Activated CD8-positive, alpha-beta T cell treated with anti-CD3 and anti-CD28 coated beads, Interleukin-2, amount 10 ng/mL, durations not matched to agents 7 days and 5 days (primary cell): ENCODE measurements at regions of chr12 and their contacts with region 1.

Region 1: GRCh38 chr12:44972746-44973421 is 78.0 kb downstream of the DBX2 start:
- DNase-seq: peak; percentile 51
- ATAC-seq: peak; percentile 65
- H3K4me3 Mint-ChIP-seq: no peak overlapping the region
- H3K27ac Mint-ChIP-seq: peak overlapping the region; percentile 37
- H3K4me1 Mint-ChIP-seq: peaks cover 21% of the 10 kb centered on the region
- H3K27me3 Mint-ChIP-seq: peaks cover 7% of the 10 kb centered on the region

Region 2: DNA sequence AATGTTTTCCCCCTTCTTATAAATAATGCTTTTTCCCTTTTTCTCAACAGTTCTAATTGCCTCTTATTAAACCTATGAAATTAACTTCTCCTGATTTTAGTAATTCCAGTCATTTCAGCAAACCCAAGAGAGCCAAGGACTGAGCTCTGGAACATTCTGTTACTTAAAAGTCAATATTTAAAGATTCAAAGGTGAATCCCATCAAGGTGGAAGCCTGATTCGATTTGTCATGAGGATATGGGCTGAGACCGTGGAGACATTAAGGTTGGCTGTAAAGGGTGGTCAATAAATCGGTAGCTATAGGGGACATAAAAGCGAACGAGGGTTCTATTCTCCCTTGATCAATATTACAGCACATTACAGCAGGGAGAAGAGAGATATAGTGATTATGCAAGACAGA is 30.2 kb before region 1 on chr12:
- CTCF ChIA-PET with region 1: interaction called, 30 read pairs
- POLR2A ChIA-PET with region 1: no interaction called
- DNase-seq: no peak
- ATAC-seq: no peak
- H3K4me3 Mint-ChIP-seq: no peak overlapping the region
- H3K27ac Mint-ChIP-seq: no peak overlapping the region
- H3K4me1 Mint-ChIP-seq: no peaks in the 10 kb centered on the region
- H3K27me3 Mint-ChIP-seq: peaks cover 11% of the 10 kb centered on the region

Region 3: GRCh38 chr12:44960856-44961255 is 12.0 kb before region 1 on chr12:
- CTCF ChIA-PET with region 1: interaction called, 12 read pairs
- POLR2A ChIA-PET with region 1: no interaction called
- DNase-seq: no peak
- ATAC-seq: no peak
- H3K4me3 Mint-ChIP-seq: no peak overlapping the region
- H3K27ac Mint-ChIP-seq: no peak overlapping the region
- H3K4me1 Mint-ChIP-seq: no peaks in the 10 kb centered on the region
- H3K27me3 Mint-ChIP-seq: peaks cover 7% of the 10 kb centered on the region